ENCODE measurements at regions of chr12 and their contacts with region 1.

Region 1: GRCh38 chr12:6335451-6336078 is 6.3 kb downstream of the TNFRSF1A start:
- DNase-seq: no peak
- ATAC-seq: peak; percentile 12; the same call in 1 of the 2 replicates
- H3K4me3 ChIP-seq: peak overlapping the region; percentile 71 to 94
- H3K27ac ChIP-seq: peak overlapping the region; percentile 99
- H3K4me1 ChIP-seq: peaks cover 63% of the 10 kb centered on the region
- H3K27me3 ChIP-seq: no peaks in the 10 kb centered on the region
- CTCF ChIP-seq: no peak

Region 2: DNA sequence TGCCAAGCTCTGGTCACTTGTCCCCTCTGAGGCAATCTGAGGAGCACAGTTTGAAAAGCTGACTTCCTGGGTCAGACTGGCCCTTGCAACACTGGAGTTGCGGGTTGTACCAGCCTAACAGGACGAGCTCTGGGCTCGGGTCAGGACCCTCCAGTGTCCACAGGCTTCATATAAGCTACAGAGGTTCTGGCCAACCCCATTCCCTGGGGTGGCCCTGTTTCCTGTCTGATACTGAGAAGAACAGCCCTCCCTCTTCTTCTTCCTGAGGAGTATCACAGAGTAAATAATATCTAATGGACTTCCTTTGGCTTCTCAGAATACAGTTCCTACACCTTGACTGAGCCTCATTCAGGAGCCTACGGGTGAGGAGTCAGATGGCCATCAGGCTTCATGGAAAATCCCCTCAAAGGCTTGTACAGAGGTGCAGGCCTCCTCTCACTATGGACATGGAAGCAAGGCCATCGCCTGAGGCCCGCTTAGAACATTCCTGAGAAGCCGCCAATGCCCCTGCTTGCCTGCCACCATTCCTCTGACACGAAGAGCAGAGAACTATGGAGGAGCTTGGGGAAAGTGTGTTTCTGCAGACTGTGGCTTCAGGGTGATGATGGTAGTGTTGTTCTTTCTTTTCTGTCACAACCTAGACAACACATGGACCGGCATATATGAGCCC is 362.0 kb before region 1 on chr12:
- CTCF ChIA-PET with region 1: no interaction called
- POLR2A ChIA-PET with region 1: no interaction called
- in situ Hi-C with region 1: no loop called
- intact Hi-C with region 1: no loop called
- DNase-seq: no peak
- ATAC-seq: no peak
- H3K4me3 ChIP-seq: no peak overlapping the region
- H3K27ac ChIP-seq: no peak overlapping the region
- H3K4me1 ChIP-seq: no peaks in the 10 kb centered on the region
- H3K27me3 ChIP-seq: peaks cover 5% of the 10 kb centered on the region
- CTCF ChIP-seq: no peak

Region 3: GRCh38 chr12:6039894-6040568 is 295.5 kb before region 1 on chr12:
- CTCF ChIA-PET with region 1: no interaction called
- POLR2A ChIA-PET with region 1: no interaction called
- in situ Hi-C with region 1: no loop called
- intact Hi-C with region 1: no loop called
- DNase-seq: peak; percentile 55
- ATAC-seq: peak; percentile 90
- H3K4me3 ChIP-seq: no peak overlapping the region
- H3K27ac ChIP-seq: no peak overlapping the region
- H3K4me1 ChIP-seq: no peaks in the 10 kb centered on the region
- H3K27me3 ChIP-seq: no peaks in the 10 kb centered on the region
- CTCF ChIP-seq: peak; percentile 88

Region 4: DNA sequence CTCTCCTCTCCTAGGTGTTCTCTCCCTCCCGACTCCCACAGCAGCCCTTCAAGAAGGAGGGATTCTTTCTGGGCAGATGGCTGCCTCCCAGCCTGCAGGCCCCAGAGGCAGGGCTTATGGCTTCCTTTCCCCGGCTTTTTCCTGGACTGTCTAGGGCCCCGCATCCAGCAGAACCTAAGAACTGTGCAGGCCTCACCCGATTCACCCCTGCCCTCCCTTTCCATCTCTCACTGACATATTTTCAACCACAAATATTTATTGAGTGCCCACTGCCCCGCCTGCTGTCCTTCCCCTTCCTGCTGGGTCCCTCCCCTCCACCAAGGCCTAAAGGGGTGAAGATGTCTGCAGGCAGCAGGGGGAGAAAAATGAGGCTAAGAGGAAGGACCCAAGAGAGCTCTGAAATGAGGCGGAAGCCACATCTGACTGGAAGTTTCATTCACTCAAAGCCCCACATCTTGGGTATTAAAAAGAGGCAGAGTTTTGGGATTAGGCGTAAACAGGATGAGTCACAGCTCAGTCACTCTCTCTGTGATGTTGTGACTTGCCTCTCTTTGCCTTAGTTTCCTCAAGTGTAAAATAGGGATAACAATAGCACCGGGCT is 36.9 kb after region 1 on chr12:
- CTCF ChIA-PET with region 1: no interaction called
- POLR2A ChIA-PET with region 1: interaction called, 7 read pairs
- in situ Hi-C with region 1: no loop called
- intact Hi-C with region 1: loop called (anchors 5 kb)
- DNase-seq: peak; percentile 71
- ATAC-seq: peak; percentile 68
- H3K4me3 ChIP-seq: peak overlapping the region in 1 of 2 experiments; percentile 2; a peak in 2 of 4 replicates
- H3K27ac ChIP-seq: peak overlapping the region; percentile 95
- H3K4me1 ChIP-seq: peaks cover 87% of the 10 kb centered on the region
- H3K27me3 ChIP-seq: no peaks in the 10 kb centered on the region
- CTCF ChIP-seq: no peak

Region 5: GRCh38 chr12:6493497-6494257 is 158.1 kb after region 1 on chr12 and contains the start of gene NCAPD2:
- CTCF ChIA-PET with region 1: no interaction called
- POLR2A ChIA-PET with region 1: interaction called, 10 read pairs
- in situ Hi-C with region 1: no loop called
- intact Hi-C with region 1: no loop called
- DNase-seq: peak; percentile 68
- ATAC-seq: peak; percentile 93
- H3K4me3 ChIP-seq: peak within 1 kb of the TSS; percentile 94 to 95
- H3K27ac ChIP-seq: peak within 1 kb of the TSS; percentile 98
- H3K4me1 ChIP-seq: peaks cover 17% of the 10 kb centered on the region
- H3K27me3 ChIP-seq: no peaks in the 10 kb centered on the region
- CTCF ChIP-seq: no peak
- total RNA-seq, gene NCAPD2: 80.3 TPM

Region 6: DNA sequence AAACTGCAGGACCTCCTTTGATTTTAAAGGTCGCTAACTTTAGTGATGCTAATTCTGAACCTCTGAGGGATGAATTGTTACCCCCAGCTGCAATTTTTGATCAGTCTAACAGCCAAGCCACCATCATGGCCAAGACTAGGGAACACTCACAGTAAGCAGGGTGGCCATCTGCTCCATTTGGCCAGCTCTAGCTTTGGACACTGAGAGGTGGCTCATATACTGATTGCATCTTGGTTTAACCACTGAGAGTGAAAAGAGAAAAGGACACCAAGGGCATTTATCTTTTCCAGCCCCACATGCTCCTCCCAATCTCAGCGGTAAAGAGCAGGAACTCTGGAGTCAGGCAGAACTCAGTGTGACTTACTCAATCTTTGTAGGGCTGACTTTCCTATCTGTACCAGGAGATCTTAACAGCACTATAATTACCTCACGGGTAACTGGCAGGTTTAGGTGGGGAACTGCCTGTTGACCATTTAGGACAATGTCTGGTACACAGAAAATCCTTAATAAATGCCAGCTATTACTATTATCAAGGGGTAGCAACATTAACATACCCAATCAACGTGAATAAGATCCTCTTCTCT is 676.6 kb after region 1 on chr12:
- CTCF ChIA-PET with region 1: no interaction called
- POLR2A ChIA-PET with region 1: no interaction called
- in situ Hi-C with region 1: no loop called
- intact Hi-C with region 1: no loop called
- DNase-seq: no peak
- ATAC-seq: no peak
- H3K4me3 ChIP-seq: no peak overlapping the region
- H3K27ac ChIP-seq: no peak overlapping the region
- H3K4me1 ChIP-seq: peaks cover 17% of the 10 kb centered on the region
- H3K27me3 ChIP-seq: no peaks in the 10 kb centered on the region
- CTCF ChIP-seq: no peak

Measured in Panc1 (cell line).